OCI-LY7 (cell line): ENCODE measurements at regions of chr14 and their contacts with region 1.

Region 1: DNA sequence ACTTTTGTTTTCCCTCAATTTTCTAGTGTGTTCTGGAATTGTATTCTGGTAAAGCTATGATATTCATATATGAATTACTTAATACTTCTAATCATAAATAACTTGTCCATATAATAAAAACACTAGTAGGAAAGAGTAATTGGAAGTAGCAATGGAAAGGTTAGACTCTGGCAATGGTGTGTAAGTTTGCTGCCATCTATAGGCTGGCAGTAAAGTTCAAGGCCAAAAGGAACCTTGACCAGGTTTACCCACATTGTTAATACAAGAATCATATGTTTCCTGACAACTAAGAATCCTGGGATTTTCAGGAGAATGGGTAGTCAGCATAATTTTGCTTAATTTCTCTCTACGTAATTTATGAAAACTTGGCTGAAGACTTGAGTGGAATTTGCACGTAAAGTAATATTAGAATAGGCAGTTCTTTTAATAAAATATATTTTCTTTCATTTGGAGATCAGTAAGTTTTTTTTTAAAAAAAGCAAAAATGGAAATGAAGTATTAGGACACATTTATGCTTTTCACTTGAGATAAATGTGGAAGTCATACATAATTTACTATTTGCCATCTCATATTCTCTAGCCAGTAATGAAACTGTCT is 926.7 kb downstream of the GALC start:
- DNase-seq: peak; percentile 59
- H3K4me3 ChIP-seq: peak overlapping the region; percentile 22
- H3K27ac ChIP-seq: peak overlapping the region; percentile 99
- H3K4me1 ChIP-seq: peaks cover 69% of the 10 kb centered on the region
- CTCF ChIP-seq: peak; percentile 93

Region 2: GRCh38 chr14:86462193-86462753 is 604.0 kb before region 1 on chr14:
- CTCF ChIA-PET with region 1: no interaction called
- POLR2A ChIA-PET with region 1: no interaction called
- intact Hi-C with region 1: loop called (anchors 5 kb)
- DNase-seq: peak; percentile 14
- H3K4me3 ChIP-seq: no peak overlapping the region
- H3K27ac ChIP-seq: no peak overlapping the region
- H3K4me1 ChIP-seq: no peaks in the 10 kb centered on the region
- CTCF ChIP-seq: peak; percentile 74

Region 3: DNA sequence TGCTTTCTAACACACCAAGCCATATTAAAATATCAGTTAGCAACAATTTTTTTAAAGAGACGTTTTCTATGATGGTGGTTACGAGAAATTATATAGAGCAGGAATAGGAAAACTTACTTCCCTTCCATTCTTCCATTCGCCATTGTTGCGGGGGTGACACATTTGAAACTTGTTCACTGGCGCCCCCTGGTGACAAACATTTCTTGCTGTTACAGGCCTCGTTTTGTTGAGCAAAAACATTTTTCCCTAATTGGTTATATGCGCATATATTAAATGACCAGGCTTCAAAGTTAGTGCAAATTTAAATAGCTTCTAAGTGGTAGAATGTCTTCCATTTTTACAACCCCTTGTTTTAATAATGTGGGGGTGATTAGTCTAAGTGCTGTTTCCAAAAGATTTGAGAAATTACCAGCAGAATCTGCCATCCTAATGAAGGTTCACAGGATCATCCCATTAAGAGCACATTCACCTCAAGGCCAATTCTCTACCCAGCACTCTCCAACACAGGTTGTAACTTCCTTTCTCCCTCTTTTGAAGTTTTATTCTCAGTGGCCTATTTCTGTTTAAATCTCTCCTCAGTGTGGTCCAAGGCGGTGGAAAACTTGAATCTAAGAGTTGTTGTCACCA is 411.6 kb before region 1 on chr14:
- CTCF ChIA-PET with region 1: no interaction called
- POLR2A ChIA-PET with region 1: no interaction called
- intact Hi-C with region 1: loop called (anchors 10 kb)
- DNase-seq: peak; percentile 49
- H3K4me3 ChIP-seq: no peak overlapping the region
- H3K27ac ChIP-seq: no peak overlapping the region
- H3K4me1 ChIP-seq: no peaks in the 10 kb centered on the region
- CTCF ChIP-seq: peak; percentile 88

Region 4: DNA sequence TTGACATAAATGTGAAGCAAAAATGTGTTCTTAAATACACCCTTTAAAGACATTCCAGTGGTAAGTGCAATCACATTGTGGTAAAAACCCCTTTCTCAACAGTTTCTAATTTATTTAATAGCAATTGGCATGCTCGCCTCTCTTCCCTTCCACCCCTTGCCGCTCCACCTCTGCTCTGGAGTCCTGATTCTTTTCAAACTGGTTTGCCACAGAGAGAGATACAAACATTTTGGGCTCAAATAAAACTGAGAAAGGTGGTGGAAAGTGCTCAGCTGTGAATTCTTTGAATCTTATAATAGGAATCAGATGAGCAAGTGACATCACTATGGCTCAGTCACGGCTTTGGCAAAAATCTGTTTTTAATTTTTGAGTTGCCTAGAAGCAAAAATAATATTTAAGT is 67.3 kb before region 1 on chr14:
- CTCF ChIA-PET with region 1: no interaction called
- POLR2A ChIA-PET with region 1: no interaction called
- intact Hi-C with region 1: no loop called
- DNase-seq: no peak
- H3K4me3 ChIP-seq: no peak overlapping the region
- H3K27ac ChIP-seq: no peak overlapping the region
- H3K4me1 ChIP-seq: no peaks in the 10 kb centered on the region
- CTCF ChIP-seq: no peak

Region 5: DNA sequence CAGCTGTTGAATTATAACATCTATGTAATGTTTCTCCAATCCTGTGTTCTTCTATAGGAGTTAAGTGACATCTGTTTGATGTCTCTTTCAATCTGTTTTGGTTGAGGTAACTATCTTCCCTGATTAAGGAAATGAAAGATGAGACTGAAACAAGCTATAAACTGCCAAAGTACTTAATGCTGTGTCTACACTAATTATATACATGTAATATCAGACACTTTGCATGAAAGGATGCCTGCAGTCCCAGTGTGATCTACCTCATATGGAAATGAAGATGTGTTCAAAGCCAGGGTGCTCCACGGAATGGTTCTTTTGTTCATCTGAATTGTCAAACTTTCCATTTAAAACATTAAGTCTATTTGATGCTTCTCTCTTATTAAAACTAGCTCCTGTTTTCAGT is 31.6 kb before region 1 on chr14:
- CTCF ChIA-PET with region 1: interaction called, 3 read pairs
- POLR2A ChIA-PET with region 1: interaction called, 3 read pairs
- intact Hi-C with region 1: loop called (anchors 1 kb)
- DNase-seq: no peak
- H3K4me3 ChIP-seq: no peak overlapping the region
- H3K27ac ChIP-seq: peak overlapping the region; percentile 14
- H3K4me1 ChIP-seq: peaks cover 18% of the 10 kb centered on the region
- CTCF ChIP-seq: no peak

Region 6: GRCh38 chr14:87049950-87050349 is 16.4 kb before region 1 on chr14:
- CTCF ChIA-PET with region 1: interaction called, 4 read pairs
- POLR2A ChIA-PET with region 1: interaction called, 15 read pairs
- intact Hi-C with region 1: no loop called
- DNase-seq: peak; percentile 67
- H3K4me3 ChIP-seq: no peak overlapping the region
- H3K27ac ChIP-seq: peak overlapping the region; percentile 1
- H3K4me1 ChIP-seq: peaks cover 29% of the 10 kb centered on the region
- CTCF ChIP-seq: peak; percentile 86

Region 7: DNA sequence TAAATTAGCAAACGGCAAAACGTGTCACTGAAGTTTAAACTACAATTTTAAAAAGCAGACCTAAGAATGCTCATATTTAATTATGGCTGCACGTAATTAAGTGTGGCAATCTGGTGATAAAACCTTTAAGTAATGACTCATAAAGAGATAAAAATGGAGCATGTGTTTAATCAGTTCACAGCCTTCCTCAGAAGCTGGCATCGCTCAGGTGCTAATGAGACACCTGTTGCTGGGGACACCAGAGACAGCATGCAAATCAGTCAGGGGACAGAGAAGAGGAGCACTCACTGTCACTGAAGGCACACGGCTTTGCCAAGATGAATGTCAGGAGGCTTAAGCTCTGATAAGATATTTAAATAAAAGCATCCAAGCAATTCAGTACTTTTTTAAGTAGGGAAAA is 86.4 kb after region 1 on chr14:
- CTCF ChIA-PET with region 1: no interaction called
- POLR2A ChIA-PET with region 1: no interaction called
- intact Hi-C with region 1: loop called (anchors 2 kb)
- DNase-seq: peak; percentile 88
- H3K4me3 ChIP-seq: peak overlapping the region; percentile 49
- H3K27ac ChIP-seq: peak overlapping the region; percentile 80
- H3K4me1 ChIP-seq: peaks cover 66% of the 10 kb centered on the region
- CTCF ChIP-seq: no peak

Region 8: DNA sequence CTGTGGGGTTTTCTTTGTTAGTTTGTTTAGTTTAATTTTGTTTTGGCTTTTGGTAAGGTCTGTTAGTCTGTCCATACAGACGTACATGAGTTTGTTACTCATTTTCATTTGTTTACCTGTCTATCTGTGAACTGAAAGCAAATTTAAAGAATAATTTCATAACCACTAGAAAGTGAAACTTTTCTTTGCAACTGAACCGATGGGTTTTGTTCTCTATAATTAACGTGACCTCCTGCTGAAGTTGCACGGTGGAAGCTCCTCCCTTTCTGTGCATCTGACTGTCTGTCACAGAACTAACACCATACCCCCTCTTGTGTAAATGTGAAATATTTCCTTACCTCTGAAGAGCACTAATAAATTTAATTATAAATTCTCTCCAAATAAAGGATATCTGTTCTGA is 331.2 kb after region 1 on chr14:
- CTCF ChIA-PET with region 1: no interaction called
- POLR2A ChIA-PET with region 1: no interaction called
- intact Hi-C with region 1: loop called (anchors 5 kb)
- DNase-seq: peak; percentile 45
- H3K4me3 ChIP-seq: no peak overlapping the region
- H3K27ac ChIP-seq: no peak overlapping the region
- H3K4me1 ChIP-seq: peaks cover 8% of the 10 kb centered on the region
- CTCF ChIP-seq: no peak

Region 9: DNA sequence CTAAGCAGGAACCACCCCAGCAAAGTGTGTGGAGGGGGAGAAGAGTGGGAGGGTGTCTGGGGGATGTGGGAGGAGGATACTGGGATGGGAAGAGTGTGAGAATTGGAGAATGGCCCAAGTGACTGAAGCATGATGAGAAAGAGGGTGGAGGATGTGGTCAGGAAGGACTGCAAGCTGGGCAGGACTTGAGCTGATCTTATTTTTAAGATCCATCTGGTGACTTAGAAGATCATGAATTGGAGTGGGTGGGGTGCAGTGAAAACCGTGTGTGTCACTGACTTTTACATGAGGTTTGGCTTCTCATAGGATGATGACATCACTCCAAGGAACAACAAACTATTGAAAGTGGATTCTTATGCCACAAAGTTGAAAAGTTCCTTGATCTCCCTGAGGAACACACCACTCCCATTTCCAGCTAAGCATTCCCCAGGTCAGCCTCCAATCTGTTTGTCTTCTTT is 639.1 kb after region 1 on chr14:
- CTCF ChIA-PET with region 1: no interaction called
- POLR2A ChIA-PET with region 1: no interaction called
- intact Hi-C with region 1: no loop called
- DNase-seq: no peak
- H3K4me3 ChIP-seq: no peak overlapping the region
- H3K27ac ChIP-seq: no peak overlapping the region
- H3K4me1 ChIP-seq: no peaks in the 10 kb centered on the region
- CTCF ChIP-seq: no peak